Psoas muscle (tissue), 8 donors: ENCODE measurements at regions of chr13 and their contacts with region 1.

Region 1: GRCh38 chr13:22801402-22802003 is 379.3 kb upstream of the SGCG start:
- DNase-seq: no peak
- ATAC-seq: no peak
- H3K4me3 ChIP-seq: no peak overlapping the region
- H3K27ac ChIP-seq: no peak overlapping the region
- H3K4me1 ChIP-seq: no peaks in the 10 kb centered on the region
- H3K27me3 ChIP-seq: no peaks in the 10 kb centered on the region
- CTCF ChIP-seq: peak; percentile 42

Region 2: DNA sequence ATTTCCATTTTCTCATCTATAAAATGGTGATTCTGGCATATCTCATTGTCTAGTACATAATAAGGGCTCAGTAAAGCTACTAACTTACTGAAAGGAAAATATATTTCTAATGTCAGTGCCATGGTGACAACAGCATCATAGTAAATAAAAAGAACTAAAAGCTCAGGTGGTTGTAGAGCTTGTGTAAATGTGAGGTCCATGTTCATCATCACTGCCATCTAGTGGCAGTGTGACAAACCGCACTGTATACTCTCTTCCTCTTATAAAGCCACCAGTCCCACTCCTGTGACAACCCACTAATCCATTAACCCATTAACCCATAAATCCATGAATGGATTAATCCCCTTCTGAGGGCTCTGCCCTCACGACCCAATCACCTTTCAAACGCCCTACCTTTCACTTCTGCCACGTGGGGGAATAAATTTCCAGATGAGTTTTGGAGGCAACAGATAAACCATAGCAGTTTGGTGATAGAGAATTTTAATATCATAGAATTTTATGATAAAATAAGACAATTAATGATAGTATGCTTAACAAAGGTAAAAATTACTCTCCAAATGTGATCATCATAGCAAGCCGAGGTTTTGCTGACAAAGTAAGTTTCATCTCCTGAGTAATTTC is 218.8 kb after region 1 on chr13:
- intact Hi-C with region 1: loop called (anchors 5 to 10 kb)
- DNase-seq: no peak
- ATAC-seq: peak in 3 of 4 donors; percentile 74 to 80 (median 75)
- H3K4me3 ChIP-seq: no peak overlapping the region
- H3K27ac ChIP-seq: no peak overlapping the region
- H3K4me1 ChIP-seq: no peaks in the 10 kb centered on the region
- H3K27me3 ChIP-seq: peaks cover 0 to 3% (median 0%) of the 10 kb centered on the region in 3 donors
- CTCF ChIP-seq: peak; percentile 76